AG04449 (cell line): ENCODE measurements at regions of chr7 and their contacts with region 1.

Region 1: DNA sequence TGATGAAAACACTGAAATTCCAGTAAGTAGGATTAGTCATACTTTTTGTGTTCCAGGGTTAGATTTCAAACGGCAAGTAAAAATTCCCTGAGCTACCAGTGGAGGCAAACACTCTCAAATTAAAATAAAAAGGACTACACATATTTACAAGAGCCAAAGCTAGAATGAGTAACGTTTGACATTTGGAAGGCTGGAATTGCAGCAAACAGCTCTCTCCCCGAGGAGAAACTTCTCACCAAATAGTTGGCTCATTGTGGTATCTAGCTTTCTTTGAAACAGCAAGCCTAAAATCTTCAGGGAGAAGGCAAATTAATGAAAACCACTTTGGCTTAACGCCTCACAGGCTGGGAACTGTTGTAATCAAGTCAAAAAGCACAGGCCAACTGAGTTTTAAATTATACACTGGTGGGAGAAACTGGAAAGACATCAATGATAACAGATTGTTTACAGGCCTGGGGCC is 288.3 kb downstream of the SNX13 start:
- DNase-seq: peak; percentile 82
- H3K4me3 ChIP-seq: no peak overlapping the region
- CTCF ChIP-seq: peak; percentile 4

Region 2: DNA sequence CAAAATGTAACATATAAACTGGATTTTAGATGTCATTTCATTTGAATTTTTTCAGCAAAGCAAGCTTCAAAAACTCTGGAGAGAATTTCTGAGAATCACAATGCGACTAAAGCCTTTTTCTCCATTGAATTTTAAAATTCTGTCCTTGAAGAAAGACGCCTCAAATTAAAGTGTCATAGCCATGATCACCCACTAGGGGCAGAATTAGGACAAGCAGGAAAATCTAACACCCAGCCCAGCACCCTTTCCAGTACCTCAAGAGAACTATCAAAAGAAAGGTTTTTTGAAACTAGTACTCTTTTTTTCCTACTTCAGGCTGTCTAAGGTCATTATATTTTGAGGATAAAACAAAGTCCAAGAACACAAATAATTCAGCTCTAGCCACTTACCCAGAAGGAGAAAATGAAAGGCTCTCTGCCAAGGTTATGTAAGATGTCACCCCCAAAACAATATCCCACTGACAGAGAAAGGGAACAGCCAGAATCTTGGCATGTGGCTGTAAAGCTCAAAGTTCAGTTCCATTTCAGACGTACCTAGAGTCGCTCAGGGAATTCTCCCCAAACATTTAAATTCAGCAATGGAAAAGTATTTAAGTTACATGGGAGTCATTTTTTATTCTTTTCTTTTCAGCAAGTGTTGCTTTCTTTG is 11.1 kb before region 1 on chr7:
- CTCF ChIA-PET with region 1: interaction called, 14 read pairs
- POLR2A ChIA-PET with region 1: no interaction called
- DNase-seq: no peak
- H3K4me3 ChIP-seq: no peak overlapping the region
- CTCF ChIP-seq: peak; percentile 41

Region 3: GRCh38 chr7:17663061-17663675 is 11.2 kb after region 1 on chr7:
- CTCF ChIA-PET with region 1: interaction called, 10 read pairs
- POLR2A ChIA-PET with region 1: interaction called, 3 read pairs
- DNase-seq: no peak
- H3K4me3 ChIP-seq: no peak overlapping the region
- CTCF ChIP-seq: no peak

Region 4: GRCh38 chr7:17690030-17690429 is 38.1 kb after region 1 on chr7:
- CTCF ChIA-PET with region 1: no interaction called
- POLR2A ChIA-PET with region 1: no interaction called
- DNase-seq: peak; percentile 86
- H3K4me3 ChIP-seq: no peak overlapping the region
- CTCF ChIP-seq: no peak